Mammary epithelial cell (primary cell): ENCODE measurements at regions of chr5 and their contacts with region 1.

Region 1: GRCh38 chr5:59218424-59219045 is 635.7 kb downstream of the RAB3C start:
- DNase-seq: no peak
- H3K4me3 ChIP-seq: no peak overlapping the region
- H3K27ac ChIP-seq: no peak overlapping the region
- H3K4me1 ChIP-seq: peaks cover 5% of the 10 kb centered on the region
- H3K27me3 ChIP-seq: no peaks in the 10 kb centered on the region
- CTCF ChIP-seq: peak; percentile 12 to 32

Region 2: DNA sequence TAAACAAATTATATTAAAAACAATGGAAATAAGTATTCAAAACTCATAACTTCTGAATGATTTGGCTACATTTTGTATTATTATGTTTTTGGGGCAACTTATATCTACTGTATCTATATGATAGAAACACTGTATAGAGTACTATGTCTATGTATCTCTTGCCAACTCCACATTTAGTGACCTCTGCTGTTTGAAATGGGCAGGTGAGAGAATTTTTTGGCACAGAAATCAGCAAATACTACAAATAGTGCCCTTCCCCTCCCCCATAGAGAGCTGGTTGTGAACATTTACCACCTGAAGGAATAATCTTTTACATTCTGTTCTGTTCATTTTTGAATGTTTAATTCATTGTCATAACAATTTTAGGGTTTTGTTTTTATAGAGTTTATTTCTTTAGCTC is 129.7 kb after region 1 on chr5:
- CTCF ChIA-PET with region 1: interaction called, 3 read pairs
- dilution Hi-C with region 1: no loop called
- in situ Hi-C with region 1: no loop called
- intact Hi-C with region 1: loop called (anchors 5 kb)
- DNase-seq: peak; percentile 2
- H3K4me3 ChIP-seq: no peak overlapping the region
- H3K27ac ChIP-seq: no peak overlapping the region
- H3K4me1 ChIP-seq: no peaks in the 10 kb centered on the region
- H3K27me3 ChIP-seq: no peaks in the 10 kb centered on the region
- CTCF ChIP-seq: peak; percentile 13 to 46

Region 3: DNA sequence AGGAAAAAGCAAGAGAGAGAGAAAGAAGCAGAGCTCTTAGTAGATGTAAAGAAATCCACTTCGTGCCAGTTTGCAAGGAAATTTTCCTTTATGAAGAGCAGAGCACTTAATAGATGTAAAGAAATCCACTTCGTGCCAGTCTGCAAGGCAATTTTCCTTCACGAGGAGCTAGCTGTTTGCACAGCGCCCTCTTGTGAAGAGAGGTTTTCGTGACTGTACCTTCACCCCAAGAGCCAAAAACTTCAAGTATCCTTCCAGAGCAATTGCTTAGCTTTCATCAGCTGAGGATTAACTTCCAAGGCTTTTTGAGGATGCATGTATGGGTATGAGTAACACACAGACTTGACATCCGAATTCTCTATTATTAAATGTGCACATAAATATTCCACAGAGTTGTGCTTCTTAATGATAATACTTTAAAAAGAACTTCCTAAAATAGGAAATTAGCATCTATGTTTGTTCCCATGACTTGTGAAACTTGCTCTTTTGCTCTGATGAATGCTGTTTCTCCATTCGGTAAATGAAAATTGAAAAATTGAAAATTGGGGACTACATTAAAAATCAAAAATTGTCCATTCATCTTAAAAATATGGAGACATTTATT is 149.4 kb after region 1 on chr5:
- CTCF ChIA-PET with region 1: no interaction called
- dilution Hi-C with region 1: no loop called
- in situ Hi-C with region 1: no loop called
- intact Hi-C with region 1: loop called (anchors 1 kb)
- DNase-seq: peak; percentile 44
- H3K4me3 ChIP-seq: no peak overlapping the region
- H3K27ac ChIP-seq: no peak overlapping the region
- H3K4me1 ChIP-seq: no peaks in the 10 kb centered on the region
- H3K27me3 ChIP-seq: no peaks in the 10 kb centered on the region
- CTCF ChIP-seq: peak; percentile 78 to 88

Region 4: GRCh38 chr5:59732301-59732700 is 513.8 kb after region 1 on chr5:
- CTCF ChIA-PET with region 1: no interaction called
- dilution Hi-C with region 1: no loop called
- in situ Hi-C with region 1: no loop called
- intact Hi-C with region 1: no loop called
- DNase-seq: no peak
- H3K4me3 ChIP-seq: no peak overlapping the region
- H3K27ac ChIP-seq: no peak overlapping the region
- H3K4me1 ChIP-seq: no peaks in the 10 kb centered on the region
- H3K27me3 ChIP-seq: no peaks in the 10 kb centered on the region
- CTCF ChIP-seq: no peak